ENCODE measurements at regions of chr12 and their contacts with region 1.

Region 1: DNA sequence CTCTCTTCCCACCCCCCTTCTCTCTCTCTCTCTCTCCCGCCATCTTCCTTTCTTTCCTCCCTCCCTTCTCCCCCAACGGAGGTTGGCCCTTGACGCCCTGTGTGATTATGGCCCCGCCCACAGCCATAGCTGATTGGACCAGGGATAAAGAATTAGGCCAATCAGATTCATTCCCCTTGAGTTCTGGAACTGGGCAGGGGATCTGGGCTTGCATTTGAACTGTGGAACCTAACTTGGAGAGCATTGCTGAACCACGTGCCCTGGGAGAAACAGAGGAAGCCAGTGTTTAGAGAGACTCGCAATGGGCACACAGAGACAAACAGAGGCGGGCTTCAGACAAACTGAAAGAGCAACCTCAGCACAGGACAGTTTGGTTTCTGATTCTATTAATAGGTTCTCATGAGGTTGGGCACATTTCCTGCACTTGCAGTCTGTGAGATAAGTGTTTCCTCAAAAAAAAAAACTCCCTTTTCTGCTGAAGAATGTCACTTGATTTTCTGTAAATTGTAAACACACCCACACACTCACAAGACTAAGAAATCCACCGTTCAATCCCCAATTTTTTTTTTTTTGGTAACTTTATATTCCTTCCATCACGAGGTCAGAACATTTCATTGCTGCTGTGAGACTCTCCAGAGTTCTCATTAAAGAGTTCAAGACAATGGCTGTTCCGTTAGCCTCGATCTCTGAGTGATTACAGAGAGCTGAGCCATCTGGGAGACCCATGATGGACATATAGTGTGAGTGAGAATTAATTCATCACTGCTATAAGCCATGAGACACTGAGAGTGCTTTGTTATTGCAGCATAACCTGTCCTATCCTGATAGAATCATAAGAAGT is 3.5 kb upstream of the P2RX7 start:
- DNase-seq: peak; percentile 52 to 82 (median 81)
- ATAC-seq: peak; percentile 90
- H3K4me3 ChIP-seq: peak overlapping the region; percentile 64
- H3K4me3 Mint-ChIP-seq: peak overlapping the region; percentile 76 to 93 (median 82)
- H3K27ac ChIP-seq: peak overlapping the region; percentile 64
- H3K27ac Mint-ChIP-seq: peak overlapping the region; percentile 80 to 99 (median 94)
- H3K4me1 ChIP-seq: peaks cover 34 to 42% of the 10 kb centered on the region in 2 donors
- H3K4me1 Mint-ChIP-seq: peaks cover 48 to 88% (median 82%) of the 10 kb centered on the region in 7 donors
- H3K27me3 ChIP-seq: no peaks in the 10 kb centered on the region
- H3K27me3 Mint-ChIP-seq: no peaks in the 10 kb centered on the region

Region 2: DNA sequence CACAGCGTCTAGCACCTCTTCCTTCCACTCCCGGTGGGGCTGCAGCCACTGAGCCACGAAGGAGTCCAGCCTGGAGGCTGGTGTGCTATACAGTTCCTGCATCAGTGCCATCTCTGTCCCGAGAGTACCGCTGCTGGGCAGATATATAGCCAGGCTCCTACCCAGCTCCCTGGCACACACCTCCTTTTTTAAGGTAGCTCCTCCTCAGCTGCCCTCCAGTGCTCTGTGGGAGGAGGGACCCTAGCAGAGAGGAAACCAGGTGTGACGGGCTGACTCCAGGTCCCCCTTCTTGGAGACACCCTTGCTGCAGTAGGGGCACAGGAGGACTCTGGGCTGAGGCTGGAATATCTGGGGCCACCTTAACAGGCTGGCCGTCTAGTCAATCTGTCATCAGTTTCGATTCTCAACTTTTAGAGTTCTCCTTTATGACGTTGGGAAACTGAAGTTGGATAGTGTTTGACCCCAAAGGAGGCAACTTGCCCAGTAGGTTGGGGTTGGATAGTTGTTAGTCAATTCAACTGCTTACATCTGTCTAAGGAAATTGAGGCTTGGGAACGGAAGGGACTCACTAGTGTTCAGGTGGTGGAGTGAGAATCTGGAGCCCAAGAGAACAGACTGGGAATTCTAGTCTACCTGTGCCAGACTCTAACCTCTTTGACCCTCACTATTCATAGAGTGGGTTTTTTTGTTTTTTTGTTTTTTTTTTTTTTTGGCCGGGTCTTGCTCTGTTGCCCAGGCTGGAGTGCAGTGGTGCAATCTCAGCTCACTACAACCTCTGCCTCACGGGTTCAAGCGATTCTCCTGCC is 90.1 kb before region 1 on chr12 and contains the start of gene OASL:
- CTCF ChIA-PET with region 1: no interaction called
- POLR2A ChIA-PET with region 1: no interaction called
- intact Hi-C with region 1: loop called in 1 of 2 experiments (anchors 1 kb)
- DNase-seq: peak; percentile 31 to 50 (median 43)
- ATAC-seq: peak; percentile 84
- H3K4me3 ChIP-seq: peak within 1 kb of the TSS; percentile 70
- H3K4me3 Mint-ChIP-seq: peak within 1 kb of the TSS; percentile 89 to 99 (median 96)
- H3K27ac ChIP-seq: peak within 1 kb of the TSS; percentile 68
- H3K27ac Mint-ChIP-seq: peak within 1 kb of the TSS; percentile 91 to 98 (median 95)
- H3K4me1 ChIP-seq: peaks cover 42 to 43% of the 10 kb centered on the region in 2 donors
- H3K4me1 Mint-ChIP-seq: peaks cover 27 to 49% (median 42%) of the 10 kb centered on the region in 7 donors
- H3K27me3 ChIP-seq: no peaks in the 10 kb centered on the region
- H3K27me3 Mint-ChIP-seq: peaks cover 0 to 18% (median 0%) of the 10 kb centered on the region in 5 donors
- total RNA-seq, gene OASL: 2.7 to 19.4 (median 4.3) TPM

Region 3: GRCh38 chr12:121110211-121110940 is 18.8 kb before region 1 on chr12:
- CTCF ChIA-PET with region 1: interaction called, 3 read pairs
- POLR2A ChIA-PET with region 1: no interaction called
- intact Hi-C with region 1: loop called in 1 of 2 experiments (anchors 1 kb)
- DNase-seq: peak; percentile 29 to 69 (median 50)
- ATAC-seq: peak; percentile 92
- H3K4me3 ChIP-seq: no peak overlapping the region
- H3K4me3 Mint-ChIP-seq: no peak overlapping the region
- H3K27ac ChIP-seq: no peak overlapping the region
- H3K27ac Mint-ChIP-seq: peak overlapping the region in 2 of 9 donors; percentile 1 to 32
- H3K4me1 ChIP-seq: no peaks in the 10 kb centered on the region
- H3K4me1 Mint-ChIP-seq: peaks cover 3 to 12% (median 5%) of the 10 kb centered on the region in 7 donors
- H3K27me3 ChIP-seq: no peaks in the 10 kb centered on the region
- H3K27me3 Mint-ChIP-seq: no peaks in the 10 kb centered on the region

Region 4: GRCh38 chr12:121209624-121210572 is 80.7 kb after region 1 on chr12 and contains the start of gene P2RX4:
- CTCF ChIA-PET with region 1: no interaction called
- POLR2A ChIA-PET with region 1: interaction called, 4 read pairs
- intact Hi-C with region 1: loop called (anchors 1 kb)
- DNase-seq: peak; percentile 77 to 90 (median 88)
- ATAC-seq: peak; percentile 87
- H3K4me3 ChIP-seq: peak within 1 kb of the TSS; percentile 85
- H3K4me3 Mint-ChIP-seq: peak within 1 kb of the TSS; percentile 79 to 96 (median 94)
- H3K27ac ChIP-seq: peak within 1 kb of the TSS; percentile 89
- H3K27ac Mint-ChIP-seq: peak within 1 kb of the TSS; percentile 90 to 100 (median 93)
- H3K4me1 ChIP-seq: peaks cover 10 to 20% of the 10 kb centered on the region in 2 donors
- H3K4me1 Mint-ChIP-seq: peaks cover 15 to 45% (median 26%) of the 10 kb centered on the region in 7 donors
- H3K27me3 ChIP-seq: no peaks in the 10 kb centered on the region
- H3K27me3 Mint-ChIP-seq: no peaks in the 10 kb centered on the region
- total RNA-seq, gene P2RX4: 34.1 to 56.9 (median 40.5) TPM

Region 5: GRCh38 chr12:121240484-121241101 is 111.4 kb after region 1 on chr12:
- CTCF ChIA-PET with region 1: no interaction called
- POLR2A ChIA-PET with region 1: no interaction called
- intact Hi-C with region 1: loop called in 1 of 2 experiments (anchors 2 kb)
- DNase-seq: peak; percentile 78 to 99 (median 96)
- ATAC-seq: peak; percentile 95
- H3K4me3 ChIP-seq: peak overlapping the region; percentile 71
- H3K4me3 Mint-ChIP-seq: peak overlapping the region; percentile 81 to 94 (median 88)
- H3K27ac ChIP-seq: peak overlapping the region; percentile 87
- H3K27ac Mint-ChIP-seq: peak overlapping the region; percentile 90 to 100 (median 99)
- H3K4me1 ChIP-seq: peaks cover 30 to 44% of the 10 kb centered on the region in 2 donors
- H3K4me1 Mint-ChIP-seq: peaks cover 26 to 57% (median 47%) of the 10 kb centered on the region in 7 donors
- H3K27me3 ChIP-seq: no peaks in the 10 kb centered on the region
- H3K27me3 Mint-ChIP-seq: no peaks in the 10 kb centered on the region

Region 6: DNA sequence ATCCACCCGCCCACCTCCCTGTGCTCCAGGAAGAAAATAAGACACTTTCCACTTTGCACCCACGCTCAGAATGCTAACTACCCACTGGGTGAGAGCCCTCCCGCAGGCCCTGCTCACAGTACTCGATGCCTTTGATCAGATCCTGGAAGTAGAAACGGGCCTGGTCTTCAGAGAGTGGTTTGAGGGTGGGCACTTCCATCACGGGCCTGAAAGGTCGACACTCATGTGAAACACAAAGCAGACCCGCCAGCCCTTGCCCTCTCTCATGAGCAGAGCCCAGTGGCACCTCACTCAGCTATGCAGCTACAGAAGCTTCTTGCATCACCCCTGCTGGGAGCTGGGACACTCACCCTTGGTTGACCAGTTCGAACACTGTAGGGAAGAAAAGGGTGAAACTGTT is 126.2 kb after region 1 on chr12:
- CTCF ChIA-PET with region 1: no interaction called
- POLR2A ChIA-PET with region 1: no interaction called
- intact Hi-C with region 1: no loop called
- DNase-seq: no peak
- ATAC-seq: no peak
- H3K4me3 ChIP-seq: no peak overlapping the region
- H3K4me3 Mint-ChIP-seq: no peak overlapping the region
- H3K27ac ChIP-seq: no peak overlapping the region
- H3K27ac Mint-ChIP-seq: peak overlapping the region in 1 of 9 donors; percentile 33
- H3K4me1 ChIP-seq: no peaks in the 10 kb centered on the region
- H3K4me1 Mint-ChIP-seq: peaks cover 0 to 5% (median 0%) of the 10 kb centered on the region in 7 donors
- H3K27me3 ChIP-seq: no peaks in the 10 kb centered on the region
- H3K27me3 Mint-ChIP-seq: no peaks in the 10 kb centered on the region

Measured in naive thymus-derived CD4-positive, alpha-beta T cell (primary cell).